Right ventricle myocardium inferior (tissue), 1 donor: ENCODE measurements at regions of chr14 and their contacts with region 1.

Region 1: DNA sequence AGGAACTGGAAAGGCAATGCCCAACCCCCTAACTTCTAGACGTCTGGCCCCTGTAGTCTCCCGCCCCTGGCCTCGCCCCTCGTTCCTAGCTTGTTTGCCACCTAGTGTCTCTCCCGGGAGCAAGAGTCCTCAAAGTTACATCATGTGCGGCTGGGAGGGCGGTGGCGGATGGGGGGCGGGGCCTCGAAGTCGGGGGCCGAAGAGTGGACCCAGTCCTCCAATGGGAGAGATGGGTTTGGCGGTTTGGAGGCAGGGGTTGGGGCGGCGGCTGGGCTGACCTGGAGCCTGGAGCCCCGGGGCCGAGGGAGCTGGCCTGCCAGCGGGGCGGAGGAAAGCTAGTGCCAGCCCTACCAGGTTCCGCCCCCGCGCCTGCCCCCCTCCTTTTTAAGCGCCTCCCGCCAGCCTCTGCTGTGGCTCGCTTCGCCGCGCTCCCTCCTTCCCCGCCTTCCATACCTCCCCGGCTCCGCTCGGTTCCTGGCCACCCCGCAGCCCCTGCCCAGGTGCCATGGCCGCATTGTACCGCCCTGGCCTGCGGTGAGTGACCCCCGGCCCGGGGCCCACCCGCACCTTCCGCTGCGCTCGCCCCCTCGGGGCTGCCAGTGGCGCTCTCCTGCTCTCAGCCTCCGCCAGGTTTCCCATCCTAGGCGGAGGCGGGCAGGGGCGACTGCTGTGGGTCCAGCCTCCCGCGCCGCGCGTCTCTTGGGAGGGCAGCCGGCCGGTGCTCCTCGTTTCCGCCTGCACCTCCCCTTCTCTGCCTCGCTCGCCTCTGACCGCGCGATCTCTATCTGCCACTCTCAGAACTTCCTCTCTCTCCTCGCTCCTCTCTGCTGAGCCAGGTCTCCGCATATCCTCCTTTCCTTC is at the start of gene PCK2:
- DNase-seq: peak; percentile 96
- ATAC-seq: peak; percentile 94
- total RNA-seq, gene PCK2: 4.3 TPM

Region 2: GRCh38 chr14:24013654-24014514 is 80.2 kb before region 1 on chr14:
- intact Hi-C with region 1: loop called (anchors 1 kb)
- DNase-seq: no peak
- ATAC-seq: peak; percentile 86

Region 3: DNA sequence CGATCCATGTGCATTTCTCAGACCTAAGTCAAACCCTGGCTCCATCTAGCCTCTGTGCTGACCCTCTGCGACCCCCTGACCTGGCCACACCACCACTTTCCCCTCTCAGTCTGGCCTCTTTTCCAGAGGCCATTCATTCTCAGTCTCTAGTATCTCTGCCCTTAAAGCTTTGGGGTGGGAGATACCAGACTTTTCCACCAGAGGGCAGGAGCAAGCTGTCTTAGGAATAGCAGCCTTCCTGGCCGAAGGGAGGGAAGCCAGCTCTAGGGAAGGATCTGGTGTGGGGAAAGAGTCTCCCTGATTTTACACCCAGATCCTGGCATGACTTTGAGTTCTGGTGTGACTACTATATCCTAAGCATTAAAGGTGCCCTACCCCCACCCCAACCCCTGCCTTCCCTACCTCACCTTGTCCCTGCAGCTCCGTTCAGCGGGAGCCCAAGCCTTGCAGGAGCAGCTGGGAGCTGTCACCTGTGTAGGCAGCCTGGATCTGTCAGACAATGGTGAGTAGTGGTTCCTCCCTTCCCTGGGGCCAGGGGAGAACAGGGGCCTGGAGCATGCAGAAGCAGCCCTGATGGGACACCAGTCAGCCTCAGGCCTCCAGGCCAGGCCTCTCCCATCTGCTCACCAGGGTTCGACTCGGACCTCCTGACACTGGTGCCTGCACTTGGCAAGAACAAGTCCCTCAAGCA is 35.7 kb before region 1 on chr14:
- intact Hi-C with region 1: loop called (anchors 2 kb)
- DNase-seq: no peak
- ATAC-seq: peak; percentile 77

Region 4: DNA sequence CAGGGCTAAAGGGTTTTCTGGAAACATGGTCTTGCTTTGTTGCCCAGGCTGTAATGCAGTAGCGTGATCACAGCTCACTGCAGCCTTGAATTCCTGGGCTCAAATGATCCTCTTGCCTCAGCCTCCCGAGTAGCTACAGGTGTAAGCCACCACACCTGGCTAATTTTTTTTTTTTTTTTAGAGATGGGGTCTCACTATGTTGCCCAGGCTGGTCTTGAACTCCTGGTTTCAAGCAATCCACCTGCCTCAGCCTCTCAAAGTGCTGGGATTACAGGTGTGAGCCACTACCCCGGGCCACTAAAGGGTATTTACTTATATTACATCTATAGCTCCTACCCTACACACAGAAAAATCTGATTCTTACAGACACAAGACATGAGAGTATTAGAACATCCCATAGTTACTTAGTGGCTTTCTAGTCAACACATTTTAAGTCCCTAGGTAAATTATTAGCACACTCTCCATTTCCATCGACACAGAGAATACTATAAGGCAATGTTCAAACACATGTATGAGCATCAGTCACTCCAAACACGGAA is 14.3 kb after region 1 on chr14:
- intact Hi-C with region 1: loop called (anchors 2 kb)
- DNase-seq: no peak
- ATAC-seq: no peak

Region 5: GRCh38 chr14:24141097-24141880 is 47.2 kb after region 1 on chr14 and contains the start of gene EMC9:
- intact Hi-C with region 1: no loop called
- DNase-seq: peak; percentile 100
- ATAC-seq: peak; percentile 96
- total RNA-seq, gene EMC9: 14.6 TPM